ENCODE measurements at regions of chr1 and their contacts with region 1.

Region 1: DNA sequence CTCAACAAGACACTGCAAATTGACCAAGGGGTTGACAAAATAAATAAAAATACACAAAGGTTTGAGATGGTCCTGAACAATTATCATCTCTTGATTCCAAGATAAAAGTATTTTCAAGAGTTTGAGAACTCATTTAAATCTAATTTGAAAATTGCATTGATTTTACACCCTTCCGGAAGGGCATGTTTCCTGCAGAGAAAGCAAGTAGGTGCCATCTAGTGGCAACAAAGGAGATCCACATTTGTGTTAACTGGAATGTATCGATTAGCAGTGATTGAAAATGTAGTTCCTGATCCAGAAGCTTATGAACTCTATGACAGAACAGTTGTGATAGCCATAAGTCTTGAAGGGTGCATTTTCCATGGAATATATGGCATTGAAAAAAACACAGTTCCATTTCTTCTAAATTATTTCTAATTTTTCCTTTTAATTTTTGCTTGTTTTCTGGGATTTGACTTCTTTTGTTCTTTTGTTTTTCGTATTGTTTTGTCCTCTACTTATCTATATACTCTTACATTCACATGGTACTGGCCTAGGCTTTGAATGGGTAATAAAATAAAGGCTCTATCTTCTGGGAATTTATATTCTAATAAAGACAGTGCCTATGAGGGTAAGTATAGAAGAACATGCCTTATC is 143.7 kb downstream of the DNM3 start:
- DNase-seq: peak; percentile 34

Region 2: DNA sequence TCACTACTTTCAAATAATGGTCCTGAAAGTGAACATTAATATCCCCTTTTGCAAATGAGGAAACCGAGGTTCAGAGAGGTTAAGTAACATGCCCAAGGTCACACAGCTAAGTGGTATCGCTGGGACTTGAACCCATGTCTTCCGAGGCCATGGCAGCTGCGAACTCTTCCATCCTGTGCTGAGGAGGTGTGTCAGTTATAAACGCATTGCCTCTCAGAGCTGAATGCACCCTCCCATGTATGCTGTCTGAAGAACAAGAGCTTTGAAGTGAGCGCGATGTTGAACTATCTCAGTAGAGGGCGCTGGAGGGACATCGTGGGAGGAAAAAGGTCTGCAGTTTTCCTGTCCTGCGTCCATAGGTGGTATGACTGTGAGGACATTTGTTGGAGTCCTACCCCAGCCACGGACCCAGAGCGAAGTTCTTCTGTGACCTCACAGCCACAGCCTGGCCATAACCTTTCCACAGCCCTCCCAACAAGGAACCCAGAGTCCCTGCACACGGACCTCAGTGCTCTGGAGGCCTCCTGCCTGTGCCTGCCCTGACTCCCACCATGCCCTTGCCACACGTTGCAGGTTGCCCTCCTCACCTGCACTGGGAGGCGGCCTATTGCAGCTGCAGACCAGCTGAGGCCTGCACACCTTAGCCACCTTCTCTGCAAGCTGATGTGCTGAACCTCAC is 340.0 kb before region 1 on chr1:
- in situ Hi-C with region 1: loop called (anchors 25 kb)
- DNase-seq: peak; percentile 72

Measured in Caki2 (cell line).